ENCODE measurements at regions of chr22 and their contacts with region 1.

Region 1: DNA sequence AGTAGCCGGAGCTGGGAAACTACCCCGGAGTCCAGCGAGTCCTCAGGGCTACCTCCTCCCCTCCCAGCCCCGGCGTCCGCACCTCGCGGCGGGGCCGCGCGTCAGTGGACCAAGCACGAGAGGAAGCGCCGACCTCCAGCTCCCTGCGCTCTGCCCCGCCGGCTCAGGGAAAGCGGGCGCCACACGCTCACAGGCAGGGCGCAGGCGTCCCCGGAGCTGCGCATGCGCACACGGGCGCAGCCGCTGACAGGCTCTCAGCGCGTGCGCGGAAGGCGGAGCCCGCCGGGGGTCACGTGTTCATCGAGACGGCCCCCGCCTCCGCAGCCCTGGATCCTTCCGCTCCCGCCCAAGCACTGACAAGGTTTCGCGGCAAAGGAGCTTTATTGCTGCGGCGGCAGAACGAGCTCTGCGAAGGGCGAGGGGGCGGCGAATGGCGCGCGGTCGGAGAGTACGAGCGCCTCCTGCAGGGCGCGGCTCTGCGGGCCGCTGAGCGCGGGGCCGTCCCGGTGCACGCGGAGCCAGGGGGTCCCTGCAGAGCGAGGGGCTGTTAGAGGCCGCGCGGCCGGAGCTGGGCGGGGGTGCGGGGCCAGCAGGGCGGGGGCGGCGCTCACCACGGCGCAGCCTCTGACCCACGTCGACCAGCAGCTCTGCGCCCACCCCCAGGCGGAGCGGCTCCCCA is at the start of gene SCO2:
- DNase-seq: peak; percentile 99
- ATAC-seq: peak; percentile 57
- H3K4me3 Mint-ChIP-seq: peak within 1 kb of the TSS; percentile 96
- H3K27ac Mint-ChIP-seq: peak within 1 kb of the TSS; percentile 95
- H3K4me1 Mint-ChIP-seq: peaks cover 30% of the 10 kb centered on the region
- H3K27me3 Mint-ChIP-seq: no peaks in the 10 kb centered on the region
- total RNA-seq, gene SCO2: 8.1 to 12.8 TPM

Region 2: DNA sequence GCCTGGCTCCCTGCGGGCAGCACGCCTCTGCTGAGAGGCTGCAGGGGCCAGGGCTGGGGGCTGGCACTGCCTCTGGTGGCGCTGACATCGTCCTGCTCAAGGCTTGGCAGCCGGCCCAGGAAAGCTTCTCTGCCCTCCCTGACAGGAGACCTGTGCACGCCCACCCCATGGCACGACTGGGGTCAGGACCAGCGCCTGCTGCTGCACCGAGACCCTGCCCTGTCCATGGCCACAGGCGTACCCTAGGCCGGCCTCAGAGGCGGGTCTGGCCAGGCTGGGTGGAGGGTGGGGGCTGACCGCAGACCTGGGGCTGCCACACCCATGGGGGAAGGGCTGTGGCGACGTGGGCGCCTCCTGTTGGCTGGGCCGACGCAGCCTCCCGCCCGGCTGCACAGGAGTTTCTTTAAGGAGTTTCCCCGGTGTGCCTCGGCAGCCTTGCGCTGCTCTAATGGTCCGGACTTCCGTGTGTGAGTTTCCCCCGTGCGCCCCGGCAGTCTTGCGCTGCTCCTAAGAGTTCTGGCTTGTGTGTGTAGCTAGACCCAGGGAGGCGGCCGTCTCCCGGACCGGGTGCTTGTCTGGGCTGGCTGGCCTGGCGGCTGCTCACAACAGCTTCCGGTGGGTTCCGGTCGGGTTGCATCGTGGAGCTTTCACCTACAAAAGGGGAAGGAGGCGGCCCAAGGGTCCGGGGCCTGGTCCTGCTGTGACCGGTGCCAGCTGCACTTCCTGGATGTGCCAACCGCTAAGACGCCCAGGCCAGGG is 335.2 kb before region 1 on chr22:
- POLR2A ChIA-PET with region 1: interaction called, 20 read pairs
- DNase-seq: peak; percentile 87
- ATAC-seq: peak; percentile 53
- H3K4me3 Mint-ChIP-seq: peak overlapping the region; percentile 95
- H3K27ac Mint-ChIP-seq: peak overlapping the region; percentile 98
- H3K4me1 Mint-ChIP-seq: peaks cover 32% of the 10 kb centered on the region
- H3K27me3 Mint-ChIP-seq: no peaks in the 10 kb centered on the region

Region 3: GRCh38 chr22:50250555-50251476 is 274.7 kb before region 1 on chr22 and contains the start of gene HDAC10:
- POLR2A ChIA-PET with region 1: interaction called, 21 read pairs
- DNase-seq: peak; percentile 90
- ATAC-seq: peak; percentile 83
- H3K4me3 Mint-ChIP-seq: peak within 1 kb of the TSS; percentile 87
- H3K27ac Mint-ChIP-seq: peak within 1 kb of the TSS; percentile 84
- H3K4me1 Mint-ChIP-seq: peaks cover 7% of the 10 kb centered on the region
- H3K27me3 Mint-ChIP-seq: no peaks in the 10 kb centered on the region
- total RNA-seq, gene HDAC10: 99.1 to 111 TPM

Region 4: GRCh38 chr22:50507991-50508884 is 17.3 kb before region 1 on chr22 and contains the start of gene NCAPH2:
- POLR2A ChIA-PET with region 1: interaction called, 175 read pairs
- DNase-seq: peak; percentile 98
- ATAC-seq: peak; percentile 72
- H3K4me3 Mint-ChIP-seq: peak within 1 kb of the TSS; percentile 97
- H3K27ac Mint-ChIP-seq: peak within 1 kb of the TSS; percentile 92
- H3K4me1 Mint-ChIP-seq: peaks cover 14% of the 10 kb centered on the region
- H3K27me3 Mint-ChIP-seq: no peaks in the 10 kb centered on the region
- total RNA-seq, gene NCAPH2: 126 TPM

Region 5: GRCh38 chr22:50544078-50544745 is 18.7 kb after region 1 on chr22:
- POLR2A ChIA-PET with region 1: interaction called, 300 read pairs
- DNase-seq: peak; percentile 92
- ATAC-seq: peak; percentile 65
- H3K4me3 Mint-ChIP-seq: peak overlapping the region; percentile 77
- H3K27ac Mint-ChIP-seq: peak overlapping the region; percentile 98
- H3K4me1 Mint-ChIP-seq: peaks cover 51% of the 10 kb centered on the region
- H3K27me3 Mint-ChIP-seq: no peaks in the 10 kb centered on the region

Region 6: GRCh38 chr22:50582562-50583293 is 57.2 kb after region 1 on chr22 and contains the start of gene CHKB:
- POLR2A ChIA-PET with region 1: interaction called, 93 read pairs
- DNase-seq: peak; percentile 98
- ATAC-seq: peak; percentile 94
- H3K4me3 Mint-ChIP-seq: peak within 1 kb of the TSS; percentile 99
- H3K27ac Mint-ChIP-seq: peak within 1 kb of the TSS; percentile 96
- H3K4me1 Mint-ChIP-seq: peaks cover 19% of the 10 kb centered on the region
- H3K27me3 Mint-ChIP-seq: no peaks in the 10 kb centered on the region
- total RNA-seq, gene CHKB: 132 to 137 TPM

Region 7: GRCh38 chr22:50627642-50628542 is 102.4 kb after region 1 on chr22 and contains the start of gene ARSA:
- POLR2A ChIA-PET with region 1: interaction called, 247 read pairs
- DNase-seq: peak; percentile 82
- ATAC-seq: peak; percentile 95
- H3K4me3 Mint-ChIP-seq: peak within 1 kb of the TSS; percentile 77
- H3K27ac Mint-ChIP-seq: peak within 1 kb of the TSS; percentile 82
- H3K4me1 Mint-ChIP-seq: peaks cover 15% of the 10 kb centered on the region
- H3K27me3 Mint-ChIP-seq: no peaks in the 10 kb centered on the region
- total RNA-seq, gene ARSA: 65.2 to 65.4 TPM